Common myeloid progenitor, CD34-positive (primary cell): ENCODE measurements at regions of chr3 and their contacts with region 1.

Region 1: DNA sequence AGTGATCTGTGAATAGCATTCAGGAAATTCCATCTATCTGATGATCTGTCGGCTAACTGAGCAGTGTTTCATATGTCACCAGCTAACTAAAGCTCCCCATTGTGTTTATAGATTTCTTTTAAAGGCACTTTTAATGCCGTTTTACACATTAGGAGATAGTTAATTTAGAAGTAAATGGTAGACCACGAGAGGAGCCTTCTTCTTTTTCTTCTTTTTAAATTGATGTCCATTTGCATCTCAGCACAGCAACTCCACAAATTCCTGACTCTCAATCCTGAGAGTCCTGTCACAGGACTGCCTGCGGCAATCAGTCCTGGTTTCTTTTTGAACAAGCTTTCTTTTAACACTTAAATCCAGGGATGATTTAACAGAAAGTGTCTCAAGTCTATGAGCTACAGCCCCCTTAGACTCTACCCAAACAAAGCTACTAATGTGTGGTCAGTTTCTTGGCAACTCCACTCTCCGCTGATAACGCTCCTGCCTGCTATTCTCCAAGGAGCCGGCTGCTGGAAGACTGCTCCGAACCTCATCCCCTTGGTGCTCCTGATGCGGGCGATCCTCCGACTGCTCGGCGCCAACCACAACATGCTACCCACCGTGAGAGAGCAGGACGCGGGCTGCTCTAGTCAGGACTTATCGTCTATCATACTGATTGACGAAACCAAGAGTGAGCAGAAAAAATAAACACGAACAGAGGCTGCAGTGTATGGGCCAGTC is 421.4 kb downstream of the MECOM start:
- DNase-seq: peak in 1 of 3 donors; percentile 48
- H3K4me3 ChIP-seq: peak overlapping the region; percentile 18 to 76 (median 63)
- H3K27ac ChIP-seq: peak overlapping the region in 1 of 2 experiments; percentile 22
- H3K4me1 ChIP-seq: peaks cover 5 to 23% (median 13%) of the 10 kb centered on the region in 4 experiments
- H3K27me3 ChIP-seq: peaks cover 0 to 11% (median 3%) of the 10 kb centered on the region in 5 experiments

Region 2: DNA sequence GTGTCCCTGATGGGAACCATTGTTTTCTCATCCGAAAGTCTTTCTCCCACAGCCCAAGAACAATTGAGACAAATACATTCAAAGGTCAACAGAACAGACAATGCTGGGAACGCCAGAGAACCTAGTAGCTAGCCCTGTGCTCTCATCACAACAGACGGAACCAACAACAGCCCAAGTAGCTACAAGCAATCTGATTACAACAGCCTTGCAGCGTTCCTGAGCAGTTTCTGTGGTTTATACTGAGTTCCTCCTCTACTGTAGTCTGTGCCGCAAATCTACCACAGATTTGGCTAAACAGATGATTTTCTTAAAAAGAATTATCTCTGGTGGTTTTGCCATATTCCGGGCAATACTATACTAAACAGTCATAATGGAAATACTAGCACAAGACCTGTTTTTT is 14.2 kb before region 1 on chr3:
- CTCF ChIA-PET with region 1: interaction called, 11 read pairs
- POLR2A ChIA-PET with region 1: interaction called, 4 read pairs
- DNase-seq: peak; percentile 83 to 97 (median 96)
- H3K4me3 ChIP-seq: peak overlapping the region in 2 of 7 experiments; percentile 29 to 40
- H3K27ac ChIP-seq: no peak overlapping the region
- H3K4me1 ChIP-seq: peaks cover 0 to 21% (median 14%) of the 10 kb centered on the region in 4 experiments
- H3K27me3 ChIP-seq: peaks cover 0 to 67% (median 37%) of the 10 kb centered on the region in 5 experiments

Region 3: GRCh38 chr3:169264711-169265110 is 22.6 kb after region 1 on chr3:
- CTCF ChIA-PET with region 1: no interaction called
- POLR2A ChIA-PET with region 1: no interaction called
- DNase-seq: no peak
- H3K4me3 ChIP-seq: no peak overlapping the region
- H3K27ac ChIP-seq: no peak overlapping the region
- H3K4me1 ChIP-seq: peaks cover 0 to 8% (median 0%) of the 10 kb centered on the region in 4 experiments
- H3K27me3 ChIP-seq: no peaks in the 10 kb centered on the region

Region 4: DNA sequence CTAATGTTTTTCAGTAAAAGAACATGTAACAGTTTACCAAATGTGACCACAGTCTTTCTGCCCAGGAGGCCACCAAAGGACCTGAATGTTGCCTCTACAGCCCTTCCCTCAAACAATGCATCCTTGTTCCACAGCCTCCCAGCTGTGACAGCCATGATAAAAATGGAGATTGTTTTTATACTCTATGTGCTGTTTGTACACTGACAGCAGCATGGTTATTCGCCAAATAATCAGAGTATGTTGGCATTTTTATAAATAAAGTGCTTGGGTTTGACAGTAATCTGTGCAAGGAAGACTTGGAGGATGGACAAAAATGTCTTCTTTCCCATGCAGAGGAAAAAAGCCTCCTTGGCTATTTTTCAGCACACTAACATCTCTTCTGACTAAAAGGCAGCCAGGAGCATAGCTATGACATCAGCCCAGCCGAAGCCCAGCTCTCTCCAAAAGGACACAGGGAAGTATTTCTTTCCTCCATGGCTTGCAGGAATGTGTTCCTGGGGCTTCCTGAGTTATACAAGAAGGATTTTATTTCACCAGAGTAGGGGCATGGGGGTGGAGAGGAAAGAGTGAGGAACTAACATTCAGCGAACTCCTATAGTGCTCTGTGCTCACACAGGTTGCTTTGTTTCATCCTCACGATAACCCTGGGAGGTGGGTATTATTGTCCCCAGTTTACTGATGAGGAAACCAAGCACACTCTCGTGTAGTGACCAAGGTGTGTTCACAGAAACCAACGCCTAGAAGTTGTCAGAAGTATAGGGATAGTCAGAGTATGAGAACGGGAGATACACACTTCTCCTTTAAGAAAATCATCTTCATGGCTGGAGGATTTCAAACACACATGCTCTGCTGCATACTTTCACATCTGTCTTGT is 81.7 kb after region 1 on chr3:
- CTCF ChIA-PET with region 1: no interaction called
- POLR2A ChIA-PET with region 1: no interaction called
- DNase-seq: peak in 1 of 3 donors; percentile 31
- H3K4me3 ChIP-seq: peak overlapping the region in 5 of 7 experiments; percentile 29 to 74 (median 58)
- H3K27ac ChIP-seq: no peak overlapping the region
- H3K4me1 ChIP-seq: peaks cover 7 to 31% (median 13%) of the 10 kb centered on the region in 4 experiments
- H3K27me3 ChIP-seq: no peaks in the 10 kb centered on the region

Region 5: GRCh38 chr3:169400874-169401273 is 158.7 kb after region 1 on chr3:
- CTCF ChIA-PET with region 1: no interaction called
- POLR2A ChIA-PET with region 1: interaction called, 16 read pairs
- DNase-seq: peak; percentile 26 to 61 (median 45)
- H3K4me3 ChIP-seq: no peak overlapping the region
- H3K27ac ChIP-seq: no peak overlapping the region
- H3K4me1 ChIP-seq: peaks cover 0 to 5% (median 0%) of the 10 kb centered on the region in 4 experiments
- H3K27me3 ChIP-seq: no peaks in the 10 kb centered on the region